ENCODE measurements at regions of chr12 and their contacts with region 1.

Region 1: GRCh38 chr12:13278249-13278787 is 81.8 kb downstream of the EMP1 start:
- DNase-seq: peak; percentile 34
- ATAC-seq: peak; percentile 99
- H3K4me3 ChIP-seq: no peak overlapping the region
- H3K27ac ChIP-seq: peak overlapping the region; percentile 40; the same call in 1 of the 2 replicates
- H3K4me1 ChIP-seq: peaks cover 3 to 13% of the 10 kb centered on the region in 2 experiments; a peak in 3 of 4 replicates
- H3K27me3 ChIP-seq: no peaks in the 10 kb centered on the region
- CTCF ChIP-seq: peak; percentile 83 to 98 (median 96)
- POLR2A ChIP-seq: no peak
- RAD21 ChIP-seq: peak; percentile 94

Region 2: DNA sequence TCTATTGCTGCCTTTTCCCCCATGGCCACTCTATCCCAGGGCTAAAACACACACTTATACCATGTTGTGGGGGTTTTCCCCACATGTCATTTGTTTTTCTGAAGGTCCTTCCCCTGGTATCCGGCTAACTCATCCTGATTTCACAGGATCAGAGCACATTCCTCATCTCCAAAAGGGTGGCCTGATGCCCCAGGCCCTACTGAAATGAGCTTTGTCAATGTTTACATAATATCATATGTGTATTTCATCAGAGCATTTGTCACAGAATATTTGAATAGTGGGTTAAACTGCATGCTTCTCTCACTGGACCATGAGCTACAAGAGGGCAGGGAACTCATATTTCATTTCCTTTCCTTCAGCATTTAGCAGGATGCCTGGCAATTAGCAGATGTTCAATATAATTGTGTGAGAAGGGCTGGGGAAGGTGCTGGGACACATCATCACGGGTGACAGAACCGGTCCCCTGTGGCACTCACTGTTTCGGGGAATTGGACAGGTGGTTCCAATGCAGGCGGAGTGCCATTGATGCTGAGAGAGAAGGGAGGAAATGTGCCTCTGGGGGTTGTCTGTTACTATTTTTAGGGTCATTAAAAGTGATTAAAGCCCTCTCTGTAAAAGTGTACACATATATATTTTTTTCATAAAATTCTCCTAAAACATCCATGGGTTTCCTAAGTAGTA is 55.0 kb before region 1 on chr12:
- CTCF ChIA-PET with region 1: no interaction called
- POLR2A ChIA-PET with region 1: no interaction called
- RAD21 ChIA-PET with region 1: no interaction called
- intact Hi-C with region 1: no loop called
- DNase-seq: no peak
- ATAC-seq: no peak
- H3K4me3 ChIP-seq: no peak overlapping the region
- H3K27ac ChIP-seq: no peak overlapping the region
- H3K4me1 ChIP-seq: peaks cover 6 to 10% of the 10 kb centered on the region in 2 experiments; a peak in 3 of 4 replicates
- H3K27me3 ChIP-seq: no peaks in the 10 kb centered on the region
- CTCF ChIP-seq: no peak
- POLR2A ChIP-seq: no peak
- RAD21 ChIP-seq: no peak

Region 3: DNA sequence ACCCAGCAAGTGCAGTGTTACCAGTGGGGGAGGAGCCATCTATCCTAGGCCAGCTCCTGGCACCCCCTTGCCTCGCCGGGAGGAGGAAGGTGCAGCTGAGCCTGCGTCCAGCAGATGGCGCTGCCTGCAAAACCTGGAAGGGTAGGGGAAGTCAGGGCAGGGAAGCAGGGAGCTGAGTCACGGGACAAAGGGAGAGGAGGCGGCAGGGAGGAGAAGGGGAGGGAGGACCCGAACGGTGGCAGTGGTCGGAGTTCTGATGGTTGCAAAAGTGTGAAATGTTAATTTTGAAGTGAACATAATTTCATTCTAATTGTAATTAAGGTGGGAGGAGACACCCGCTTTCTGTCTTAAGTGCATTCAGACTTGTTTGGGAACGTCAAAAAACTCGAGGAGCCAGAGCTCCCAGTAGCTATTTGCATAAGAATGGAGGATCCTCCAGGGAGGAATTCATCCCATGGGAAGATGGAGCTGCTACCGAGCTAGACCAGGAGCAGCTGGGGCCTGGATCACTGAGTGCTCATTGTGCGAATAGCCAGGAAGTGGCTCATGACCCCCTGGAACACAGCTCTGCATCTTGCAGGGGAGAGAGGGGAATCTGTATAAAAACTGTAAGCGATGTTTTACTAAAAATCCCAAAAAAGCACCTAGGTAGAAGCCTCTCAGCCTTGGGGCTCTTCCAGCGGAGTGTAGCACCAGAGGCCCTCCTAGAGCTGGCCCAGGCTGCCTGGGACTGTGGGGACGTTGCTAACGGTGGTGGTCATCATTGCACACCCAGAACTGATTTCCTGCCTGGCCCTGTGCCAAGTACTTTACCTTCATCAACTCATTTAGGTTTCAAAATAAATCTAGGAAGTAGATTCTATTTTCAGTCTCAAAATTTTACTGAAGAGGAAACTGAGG is 22.3 kb before region 1 on chr12:
- CTCF ChIA-PET with region 1: interaction called, 12 read pairs
- POLR2A ChIA-PET with region 1: no interaction called
- RAD21 ChIA-PET with region 1: no interaction called
- intact Hi-C with region 1: no loop called
- DNase-seq: peak; percentile 89
- ATAC-seq: peak; percentile 100
- H3K4me3 ChIP-seq: peak overlapping the region in 1 of 2 experiments; percentile 13; a peak in 1 of 4 replicates
- H3K27ac ChIP-seq: no peak overlapping the region
- H3K4me1 ChIP-seq: peaks cover 0 to 15% of the 10 kb centered on the region in 2 experiments; a peak in 2 of 4 replicates
- H3K27me3 ChIP-seq: no peaks in the 10 kb centered on the region
- CTCF ChIP-seq: peak; percentile 91 to 98 (median 97)
- POLR2A ChIP-seq: no peak
- RAD21 ChIP-seq: peak; percentile 98

Region 4: DNA sequence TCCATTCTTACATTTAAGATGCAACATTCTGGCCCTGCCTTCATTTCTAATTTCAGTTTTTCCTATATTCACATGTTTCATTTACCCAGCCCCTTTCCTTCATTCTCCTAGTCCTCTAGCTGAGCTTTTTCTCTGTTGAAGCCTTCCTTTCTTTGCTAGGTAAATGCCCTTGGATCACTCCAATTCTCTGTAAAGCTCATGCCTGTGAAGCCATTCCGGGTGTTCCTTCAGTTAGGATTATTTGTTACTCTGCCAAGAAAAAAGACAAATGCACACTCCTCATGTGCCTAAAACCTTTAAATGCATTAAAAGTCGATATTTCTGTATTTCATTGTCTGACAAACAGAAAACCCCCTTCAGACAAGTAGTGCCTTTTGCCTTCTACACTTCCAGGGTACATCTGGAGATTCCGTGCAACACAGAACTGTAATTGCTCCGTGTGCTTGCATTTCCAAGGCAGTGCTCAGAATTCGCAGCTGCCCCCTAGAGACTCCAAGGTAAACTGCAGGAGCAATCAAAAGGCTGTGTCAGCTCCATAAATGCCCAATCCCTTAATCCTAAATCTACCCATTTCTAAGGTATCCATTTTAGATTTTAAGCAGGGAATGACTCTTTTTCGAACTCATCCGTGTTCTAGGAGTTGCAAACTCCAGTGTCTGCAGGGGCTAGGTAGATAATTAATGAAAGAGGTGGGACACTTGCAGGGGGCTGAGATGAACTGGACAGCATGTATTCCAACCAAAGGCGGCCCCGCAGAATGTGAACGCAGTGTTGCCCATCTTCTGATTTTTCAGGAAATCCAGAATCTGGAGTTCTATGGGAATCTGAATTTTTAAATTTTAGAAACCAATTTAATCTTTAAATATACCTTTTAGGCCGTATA is 382.9 kb after region 1 on chr12:
- CTCF ChIA-PET with region 1: interaction called, 11 read pairs
- POLR2A ChIA-PET with region 1: no interaction called
- RAD21 ChIA-PET with region 1: interaction called in 1 of 2 experiments, 3 read pairs
- intact Hi-C with region 1: loop called (anchors 1 kb)
- DNase-seq: peak; percentile 47
- ATAC-seq: peak; percentile 99
- H3K4me3 ChIP-seq: no peak overlapping the region
- H3K27ac ChIP-seq: no peak overlapping the region
- H3K4me1 ChIP-seq: peaks cover 7 to 9% of the 10 kb centered on the region in 2 experiments; a peak in 3 of 4 replicates
- H3K27me3 ChIP-seq: no peaks in the 10 kb centered on the region
- CTCF ChIP-seq: peak; percentile 53 to 92 (median 84); a peak in 5 of 6 replicates
- POLR2A ChIP-seq: no peak
- RAD21 ChIP-seq: peak; percentile 78

Measured in HCT116 (cell line).